K562 (cell line): ENCODE measurements at regions of chr2 and their contacts with region 1.

Region 1: GRCh38 chr2:176096986-176097819 is 2.4 kb upstream of the HOXD12 start:
- DNase-seq: peak; percentile 84 to 86 (median 84)
- ATAC-seq: peak; percentile 96
- H3K4me3 ChIP-seq: peak overlapping the region; percentile 29
- H3K27ac ChIP-seq: no peak overlapping the region
- H3K4me1 ChIP-seq: peaks cover 8 to 33% of the 10 kb centered on the region in 2 experiments
- H3K27me3 ChIP-seq: peaks cover 70 to 80% of the 10 kb centered on the region in 2 experiments
- CTCF ChIP-seq: peak; percentile 84 to 90 (median 87)
- EP300 ChIP-seq: no peak
- POLR2A ChIP-seq: no peak
- RAD21 ChIP-seq: peak; percentile 95 to 96

Region 2: DNA sequence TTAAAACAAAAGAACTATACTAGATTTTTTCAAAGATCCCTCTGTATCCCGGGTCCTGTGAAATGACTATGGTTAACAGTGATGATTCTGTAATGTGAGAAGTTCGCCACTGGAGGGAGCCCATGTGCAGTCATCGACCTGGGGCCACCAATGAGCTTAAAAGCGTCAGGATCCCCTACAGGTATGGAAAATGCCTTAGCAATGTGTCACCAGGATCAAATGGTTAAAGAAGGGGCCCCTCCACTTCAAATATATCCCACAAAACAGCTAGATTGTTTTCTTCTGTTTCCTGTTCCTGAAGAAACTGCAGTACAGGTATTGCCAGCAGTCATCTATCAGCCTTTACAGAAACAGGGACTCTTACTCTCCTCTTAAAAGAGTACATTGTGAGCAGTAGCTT is 1348.3 kb before region 1 on chr2:
- CTCF ChIA-PET with region 1: no interaction called
- POLR2A ChIA-PET with region 1: no interaction called
- in situ Hi-C with region 1: no loop called
- intact Hi-C with region 1: loop called (anchors 5 kb)
- DNase-seq: peak; percentile 70 to 85 (median 78)
- ATAC-seq: peak; percentile 97
- H3K4me3 ChIP-seq: no peak overlapping the region
- H3K27ac ChIP-seq: no peak overlapping the region
- H3K4me1 ChIP-seq: no peaks in the 10 kb centered on the region
- H3K27me3 ChIP-seq: peaks cover 8 to 35% of the 10 kb centered on the region in 2 experiments
- CTCF ChIP-seq: peak; percentile 82 to 86 (median 83)
- EP300 ChIP-seq: no peak
- POLR2A ChIP-seq: no peak
- RAD21 ChIP-seq: peak; percentile 46 to 72

Region 3: DNA sequence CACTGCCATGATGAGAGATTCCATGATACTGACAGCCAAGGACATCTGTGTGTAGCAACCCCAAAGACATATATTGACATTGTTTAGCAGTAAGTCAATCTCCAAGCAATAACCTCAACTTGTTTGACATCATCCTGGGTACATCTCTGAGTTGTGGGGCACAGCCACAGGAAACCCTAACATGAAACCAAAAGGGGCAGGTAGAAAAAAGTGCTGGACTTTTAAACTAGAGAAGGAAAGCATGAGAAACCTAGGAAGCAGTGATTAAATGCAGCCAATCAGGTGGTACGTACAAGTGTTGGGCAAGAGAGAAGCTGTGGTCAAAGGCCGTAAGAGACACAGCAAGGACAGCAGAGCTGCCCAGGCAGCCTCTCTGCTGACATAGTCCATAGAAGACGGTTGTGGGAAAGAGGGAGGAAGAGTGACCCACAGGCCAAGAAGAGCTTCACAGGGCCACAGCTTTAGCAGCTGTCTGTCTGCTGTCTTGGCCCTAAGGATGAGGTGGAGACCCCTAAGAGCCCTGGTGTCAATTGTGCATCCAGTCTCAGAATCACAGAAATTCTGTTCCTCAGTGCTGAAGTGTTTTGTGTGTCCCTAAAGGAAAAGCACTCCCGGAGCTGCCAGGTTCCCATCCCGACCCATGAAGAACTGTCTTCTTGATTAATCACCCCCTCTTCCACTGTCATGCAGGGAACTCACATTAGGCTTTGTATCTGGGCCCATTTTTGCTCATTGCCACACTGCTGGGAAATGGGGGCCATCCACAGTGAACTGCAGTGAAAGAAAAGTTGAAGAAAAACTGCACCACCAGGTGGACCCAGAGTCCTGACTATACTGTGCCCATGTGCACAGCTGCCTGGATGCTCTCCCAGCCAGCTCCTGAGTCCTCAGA is 1066.6 kb before region 1 on chr2:
- CTCF ChIA-PET with region 1: interaction called, 4 read pairs
- POLR2A ChIA-PET with region 1: no interaction called
- in situ Hi-C with region 1: loop called (anchors 25 kb)
- intact Hi-C with region 1: no loop called
- DNase-seq: peak in 2 of 4 experiments; percentile 36 to 55
- ATAC-seq: peak; percentile 98
- H3K4me3 ChIP-seq: no peak overlapping the region
- H3K27ac ChIP-seq: no peak overlapping the region
- H3K4me1 ChIP-seq: no peaks in the 10 kb centered on the region
- H3K27me3 ChIP-seq: peaks cover 0 to 6% of the 10 kb centered on the region in 2 experiments; a peak in 3 of 5 replicates
- CTCF ChIP-seq: peak; percentile 60 to 73 (median 68)
- EP300 ChIP-seq: no peak
- POLR2A ChIP-seq: no peak
- RAD21 ChIP-seq: peak; percentile 55 to 82

Region 4: GRCh38 chr2:175366815-175367214 is 730.4 kb before region 1 on chr2:
- CTCF ChIA-PET with region 1: interaction called, 3 read pairs
- POLR2A ChIA-PET with region 1: no interaction called
- in situ Hi-C with region 1: loop called (anchors 5 kb)
- intact Hi-C with region 1: no loop called
- DNase-seq: peak; percentile 53 to 67 (median 62)
- ATAC-seq: peak; percentile 98
- H3K4me3 ChIP-seq: no peak overlapping the region
- H3K27ac ChIP-seq: no peak overlapping the region
- H3K4me1 ChIP-seq: no peaks in the 10 kb centered on the region
- H3K27me3 ChIP-seq: 0 out of 5 replicates have a peak, but pooled peaks cover 0 to 4% of the 10 kb centered on the region in 2 experiments
- CTCF ChIP-seq: peak; percentile 86 to 88 (median 88)
- EP300 ChIP-seq: no peak
- POLR2A ChIP-seq: no peak
- RAD21 ChIP-seq: peak; percentile 83 to 84

Region 5: DNA sequence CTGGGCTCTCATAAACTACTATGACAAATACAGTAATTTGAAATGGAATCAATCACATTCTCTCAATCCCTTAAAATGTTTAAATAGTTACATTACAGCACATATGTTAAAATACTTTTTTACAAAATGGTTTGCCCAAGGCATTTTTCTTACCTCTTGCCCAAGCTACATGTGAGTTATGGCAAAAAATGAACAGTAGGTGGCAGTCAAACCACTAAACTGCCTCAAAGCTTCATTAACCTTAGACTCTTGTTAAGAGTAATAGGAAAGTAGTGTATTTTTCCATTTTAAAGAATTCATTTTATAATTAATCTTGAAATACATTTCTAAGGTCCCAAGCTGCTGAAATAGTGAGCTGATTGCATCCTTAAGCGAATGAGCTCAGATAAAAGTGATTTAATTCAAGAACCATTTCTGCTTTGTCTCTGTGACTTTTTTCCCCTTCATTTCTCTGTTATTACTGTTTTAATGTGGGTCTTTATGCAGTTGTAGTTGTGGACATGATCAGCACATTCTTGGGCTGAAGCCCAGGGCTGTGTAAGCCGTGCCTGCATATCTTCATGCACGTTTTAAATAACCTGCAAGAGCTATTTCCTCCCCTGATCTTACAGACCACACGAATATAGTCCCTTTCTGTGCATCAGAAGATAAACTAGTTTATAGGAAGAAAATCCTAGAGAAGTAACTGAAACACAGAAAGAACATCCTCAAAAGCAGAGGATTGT is 406.9 kb before region 1 on chr2:
- CTCF ChIA-PET with region 1: interaction called, 13 read pairs
- POLR2A ChIA-PET with region 1: no interaction called
- in situ Hi-C with region 1: no loop called
- intact Hi-C with region 1: loop called (anchors 1 kb)
- DNase-seq: peak; percentile 37 to 78 (median 63)
- ATAC-seq: peak; percentile 93
- H3K4me3 ChIP-seq: no peak overlapping the region
- H3K27ac ChIP-seq: no peak overlapping the region
- H3K4me1 ChIP-seq: no peaks in the 10 kb centered on the region
- H3K27me3 ChIP-seq: peaks cover 0 to 6% of the 10 kb centered on the region in 2 experiments; a peak in 4 of 5 replicates
- CTCF ChIP-seq: peak; percentile 66 to 92 (median 74)
- EP300 ChIP-seq: no peak
- POLR2A ChIP-seq: no peak
- RAD21 ChIP-seq: peak; percentile 97

Region 6: DNA sequence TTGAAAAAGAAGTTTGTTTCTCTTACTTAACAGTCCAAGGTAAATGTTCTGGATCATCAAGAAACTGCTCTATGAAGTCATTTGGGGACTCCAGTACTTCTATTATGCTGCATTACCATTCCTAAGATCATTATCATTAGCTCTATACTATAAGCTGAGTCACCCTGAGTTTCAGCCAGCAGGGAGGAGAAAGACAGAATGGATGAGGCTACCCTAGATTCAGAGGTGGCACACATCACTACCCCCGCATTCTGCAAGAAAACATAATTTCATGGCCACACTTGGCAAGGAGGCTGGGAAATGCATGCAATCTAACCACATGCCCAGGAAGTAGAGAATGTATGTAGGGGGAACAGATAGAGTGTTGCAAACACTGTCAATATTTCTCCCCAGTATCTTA is 78.5 kb before region 1 on chr2:
- CTCF ChIA-PET with region 1: no interaction called
- POLR2A ChIA-PET with region 1: no interaction called
- in situ Hi-C with region 1: no loop called
- intact Hi-C with region 1: no loop called
- DNase-seq: peak; percentile 25 to 57 (median 42)
- ATAC-seq: peak; percentile 82
- H3K4me3 ChIP-seq: no peak overlapping the region
- H3K27ac ChIP-seq: peak overlapping the region; percentile 67
- H3K4me1 ChIP-seq: peaks cover 10 to 25% of the 10 kb centered on the region in 2 experiments
- H3K27me3 ChIP-seq: no peaks in the 10 kb centered on the region
- CTCF ChIP-seq: no peak
- EP300 ChIP-seq: no peak; the same call in 1 of the 2 replicates
- POLR2A ChIP-seq: no peak
- RAD21 ChIP-seq: 0 out of 4 replicates have a peak, but pooled peaks of 1 of the 2 experiments have one; percentile 8